Gastrocnemius medialis (tissue), 4 donors: ENCODE measurements at regions of chr11 and their contacts with region 1.

Region 1: DNA sequence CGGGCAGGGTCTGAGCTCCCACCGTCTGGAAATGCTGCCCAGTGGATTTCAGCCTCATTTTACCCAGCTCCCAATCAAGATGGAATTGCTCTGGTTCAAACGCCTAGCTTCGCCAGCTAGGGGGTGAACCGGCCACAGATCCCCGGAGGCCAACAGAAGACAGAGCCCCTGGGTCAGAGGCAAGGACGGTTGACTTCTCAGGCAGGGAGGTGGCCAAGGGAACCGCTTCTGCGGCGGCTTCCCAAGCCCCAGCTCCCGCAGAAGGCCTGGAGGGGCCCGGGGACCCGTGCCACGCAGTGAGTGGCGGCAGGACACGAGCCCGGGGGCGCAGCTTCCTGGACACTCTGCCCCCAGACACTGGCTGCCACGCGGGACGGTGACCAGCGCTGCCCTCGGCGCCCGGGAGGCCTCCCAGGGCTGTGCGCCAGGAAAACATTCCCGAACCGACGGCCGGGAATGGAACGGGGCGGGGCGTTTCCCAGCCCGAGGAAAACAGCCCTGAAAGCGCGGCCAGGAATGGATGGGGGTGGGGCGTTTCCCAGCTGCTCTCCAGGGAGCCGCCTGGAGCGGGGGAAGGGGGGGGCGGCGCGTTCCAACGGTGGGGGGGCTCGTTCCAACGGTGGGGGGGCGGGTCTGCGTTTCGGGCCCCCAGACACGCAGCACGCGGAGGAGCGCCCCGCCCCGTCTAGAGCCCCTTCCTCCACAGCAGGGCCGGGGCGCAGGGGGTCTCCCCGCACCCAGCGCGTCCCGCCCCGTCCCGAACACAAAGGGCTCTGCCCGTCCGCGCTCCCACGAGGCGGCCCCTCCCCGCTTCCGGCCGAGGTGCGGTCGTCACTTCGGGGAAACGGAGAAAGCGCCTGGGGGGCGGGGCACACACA is 13.5 kb upstream of the B4GALNT4 start:
- DNase-seq: peak; percentile 73 to 77
- ATAC-seq: peak; percentile 69 to 72
- H3K4me3 ChIP-seq: peak overlapping the region; percentile 55 to 57 (median 56)
- H3K27ac ChIP-seq: peak overlapping the region; percentile 91 to 93 (median 92)
- H3K4me1 ChIP-seq: peaks cover 24 to 29% of the 10 kb centered on the region in 2 donors
- H3K27me3 ChIP-seq: peaks cover 0 to 5% (median 4%) of the 10 kb centered on the region in 3 donors
- CTCF ChIP-seq: no peak
- POLR2A ChIP-seq: peak; percentile 29 to 47

Region 2: DNA sequence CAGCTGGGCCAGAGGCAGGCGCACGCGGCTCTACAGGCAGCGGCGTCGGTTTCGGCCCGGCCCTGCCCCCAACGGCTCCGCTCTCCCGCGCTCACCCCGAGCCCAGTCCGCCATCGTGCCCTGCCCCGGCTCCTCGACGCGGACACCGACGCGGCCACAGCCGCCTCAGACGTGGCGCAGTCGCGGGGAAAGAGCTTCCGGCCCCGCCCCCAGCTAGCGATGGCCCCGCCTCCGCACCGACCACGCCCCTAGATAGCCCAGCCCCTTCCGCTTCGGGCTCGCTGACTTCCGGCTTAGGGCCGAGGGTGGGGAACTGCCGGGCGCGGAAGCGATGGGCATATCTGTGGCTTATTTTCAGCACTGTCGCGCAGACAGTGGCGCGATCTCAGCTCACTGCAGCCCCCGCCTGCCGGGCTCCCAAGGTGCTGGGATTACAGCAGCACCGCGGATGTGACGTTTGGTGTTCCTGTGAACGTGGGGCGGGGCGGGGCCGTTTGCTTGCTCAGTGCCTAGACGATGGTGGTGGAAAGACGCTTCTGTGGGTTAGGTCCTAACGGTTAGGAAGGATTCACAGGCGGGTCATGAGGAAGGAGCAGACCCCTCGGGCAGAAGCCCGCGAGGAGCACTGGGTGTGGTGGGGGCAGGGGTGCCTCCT is 148.5 kb before region 1 on chr11 and contains the starts of genes BET1L and RIC8A:
- in situ Hi-C with region 1: no loop called
- intact Hi-C with region 1: loop called (anchors 5 kb)
- DNase-seq: peak; percentile 87 to 96
- ATAC-seq: peak; percentile 84 to 87
- H3K4me3 ChIP-seq: peak within 1 kb of the TSS; percentile 72 to 99 (median 84)
- H3K27ac ChIP-seq: peak within 1 kb of the TSS; percentile 95 to 100 (median 98)
- H3K4me1 ChIP-seq: peaks cover 26 to 41% of the 10 kb centered on the region in 2 donors
- H3K27me3 ChIP-seq: no peaks in the 10 kb centered on the region
- CTCF ChIP-seq: no peak
- POLR2A ChIP-seq: peak; percentile 94 to 96
- total RNA-seq, gene BET1L: 11.3 to 15.9 (median 12.8) TPM
- total RNA-seq, gene RIC8A: 35.6 to 68.5 (median 47.8) TPM

Region 3: GRCh38 chr11:250740-251299 is 105.0 kb before region 1 on chr11:
- in situ Hi-C with region 1: no loop called
- intact Hi-C with region 1: loop called (anchors 10 kb)
- DNase-seq: peak in 1 of 2 donors; percentile 38
- ATAC-seq: peak in 1 of 2 donors; percentile 77
- H3K4me3 ChIP-seq: no peak overlapping the region
- H3K27ac ChIP-seq: no peak overlapping the region
- H3K4me1 ChIP-seq: no peaks in the 10 kb centered on the region
- H3K27me3 ChIP-seq: no peaks in the 10 kb centered on the region
- CTCF ChIP-seq: peak in 4 of 5 experiments; percentile 35 to 52 (median 48)
- POLR2A ChIP-seq: no peak

Region 4: DNA sequence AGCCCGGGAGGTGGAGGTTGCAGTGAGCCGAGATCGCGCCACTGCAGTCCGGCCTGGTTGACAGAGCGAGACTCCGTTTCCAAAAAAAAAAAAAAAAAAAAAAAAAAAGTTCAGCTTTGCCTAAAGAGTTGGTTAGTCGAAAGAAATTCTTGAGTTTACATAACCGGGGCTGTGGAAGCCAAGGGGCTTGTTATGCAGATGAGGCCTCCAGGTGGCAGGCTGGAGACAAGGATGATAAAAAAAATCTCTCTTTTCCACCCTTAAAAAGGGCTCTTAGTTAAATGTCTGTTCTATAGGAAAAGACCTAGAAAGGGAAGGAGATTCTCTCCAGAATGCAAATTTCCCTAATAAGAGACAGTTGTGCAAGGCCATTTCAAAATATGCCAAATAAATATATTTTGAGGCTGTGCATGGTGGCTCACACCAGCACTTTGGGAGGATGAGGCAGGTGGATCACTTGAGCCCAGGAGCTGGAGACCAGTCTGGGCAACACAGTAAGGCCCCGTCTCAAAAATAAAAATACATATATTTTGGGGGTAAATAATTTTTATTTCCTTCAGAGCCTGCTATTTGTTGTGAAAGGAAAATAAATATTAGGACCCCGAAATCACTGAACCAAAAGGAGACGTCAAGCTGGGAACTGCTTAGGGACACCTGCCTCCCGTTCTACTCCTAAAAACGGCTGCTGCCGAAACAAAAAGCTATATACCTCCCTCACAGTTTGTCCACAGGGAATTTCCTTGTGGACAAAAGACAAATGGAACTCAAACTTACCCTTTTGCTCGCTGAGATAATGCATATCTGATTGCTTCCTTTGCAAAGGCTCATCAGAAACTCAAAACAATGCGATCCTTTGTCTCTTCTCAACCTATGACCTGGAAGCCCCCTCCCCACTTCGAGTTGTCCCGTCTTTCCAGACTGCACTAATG is 50.6 kb before region 1 on chr11:
- in situ Hi-C with region 1: loop called in 2 of 4 experiments (anchors 5 to 10 kb)
- intact Hi-C with region 1: loop called (anchors 5 kb)
- DNase-seq: no peak
- ATAC-seq: peak; percentile 50 to 53
- H3K4me3 ChIP-seq: no peak overlapping the region
- H3K27ac ChIP-seq: peak overlapping the region in 3 of 4 donors; percentile 9 to 88 (median 33)
- H3K4me1 ChIP-seq: peaks cover 7 to 15% of the 10 kb centered on the region in 2 donors
- H3K27me3 ChIP-seq: peaks cover 7 to 11% (median 8%) of the 10 kb centered on the region in 3 donors
- CTCF ChIP-seq: peak; percentile 16 to 58 (median 53)
- POLR2A ChIP-seq: no peak

Region 5: GRCh38 chr11:313787-314547 is 41.9 kb before region 1 on chr11 and contains the start of gene IFITM1:
- in situ Hi-C with region 1: loop called in 2 of 4 experiments (anchors 5 to 10 kb)
- intact Hi-C with region 1: loop called (anchors 2 kb)
- DNase-seq: no peak
- ATAC-seq: peak; percentile 59 to 64
- H3K4me3 ChIP-seq: peak within 1 kb of the TSS; percentile 46 to 61 (median 54)
- H3K27ac ChIP-seq: peak within 1 kb of the TSS; percentile 74 to 82 (median 78)
- H3K4me1 ChIP-seq: peaks cover 0 to 5% of the 10 kb centered on the region in 2 donors
- H3K27me3 ChIP-seq: peaks cover 8 to 23% (median 8%) of the 10 kb centered on the region in 3 donors
- CTCF ChIP-seq: no peak
- POLR2A ChIP-seq: peak; percentile 50 to 78
- total RNA-seq, gene IFITM1: 47.8 to 103 (median 80.5) TPM